IMR-90 (cell line): ENCODE measurements at regions of chr6 and their contacts with region 1.

Region 1: GRCh38 chr6:108052706-108053105 is 21.8 kb downstream of the OSTM1 start:
- DNase-seq: no peak
- ATAC-seq: no peak
- H3K4me3 ChIP-seq: no peak overlapping the region
- H3K27ac ChIP-seq: no peak overlapping the region
- H3K4me1 ChIP-seq: no peaks in the 10 kb centered on the region
- H3K27me3 ChIP-seq: no peaks in the 10 kb centered on the region
- CTCF ChIP-seq: no peak
- POLR2A ChIP-seq: no peak
- RAD21 ChIP-seq: no peak

Region 2: DNA sequence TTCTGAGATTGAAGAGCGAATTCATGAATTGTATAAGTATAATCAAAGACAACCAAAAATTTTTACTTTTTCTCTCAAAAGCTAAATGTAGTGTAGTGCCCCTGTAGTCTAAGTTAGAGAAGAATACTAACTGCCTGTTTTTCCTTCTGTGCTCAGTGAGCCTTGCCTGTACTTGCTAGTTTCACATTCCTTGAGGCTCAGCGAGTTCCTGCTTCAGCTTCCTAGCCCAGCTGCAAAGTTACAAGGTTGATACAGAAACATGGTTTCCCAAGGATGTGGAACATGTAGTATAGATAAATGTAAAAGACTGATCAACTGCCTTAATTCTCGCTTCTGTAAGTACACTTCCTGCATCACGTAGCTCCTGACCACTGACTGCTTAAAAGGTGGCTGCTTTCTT is 61.6 kb before region 1 on chr6:
- CTCF ChIA-PET with region 1: no interaction called
- POLR2A ChIA-PET with region 1: no interaction called
- dilution Hi-C with region 1: no loop called
- in situ Hi-C with region 1: loop called (anchors 5 kb)
- intact Hi-C with region 1: no loop called
- DNase-seq: no peak
- ATAC-seq: no peak
- H3K4me3 ChIP-seq: no peak overlapping the region
- H3K27ac ChIP-seq: no peak overlapping the region
- H3K4me1 ChIP-seq: no peaks in the 10 kb centered on the region
- H3K27me3 ChIP-seq: no peaks in the 10 kb centered on the region; the same call in none of the 2 replicates
- CTCF ChIP-seq: no peak
- POLR2A ChIP-seq: no peak
- RAD21 ChIP-seq: no peak

Region 3: GRCh38 chr6:109069746-109070145 is 1017.0 kb after region 1 on chr6:
- CTCF ChIA-PET with region 1: no interaction called
- POLR2A ChIA-PET with region 1: no interaction called
- dilution Hi-C with region 1: no loop called
- in situ Hi-C with region 1: no loop called
- intact Hi-C with region 1: no loop called
- DNase-seq: no peak
- ATAC-seq: no peak
- H3K4me3 ChIP-seq: no peak overlapping the region
- H3K27ac ChIP-seq: no peak overlapping the region
- H3K4me1 ChIP-seq: no peaks in the 10 kb centered on the region
- H3K27me3 ChIP-seq: no peaks in the 10 kb centered on the region
- CTCF ChIP-seq: no peak
- POLR2A ChIP-seq: no peak
- RAD21 ChIP-seq: no peak